Cardiac septum (tissue), 1 donor: ENCODE measurements at regions of chr21 and their contacts with region 1.

Region 1: DNA sequence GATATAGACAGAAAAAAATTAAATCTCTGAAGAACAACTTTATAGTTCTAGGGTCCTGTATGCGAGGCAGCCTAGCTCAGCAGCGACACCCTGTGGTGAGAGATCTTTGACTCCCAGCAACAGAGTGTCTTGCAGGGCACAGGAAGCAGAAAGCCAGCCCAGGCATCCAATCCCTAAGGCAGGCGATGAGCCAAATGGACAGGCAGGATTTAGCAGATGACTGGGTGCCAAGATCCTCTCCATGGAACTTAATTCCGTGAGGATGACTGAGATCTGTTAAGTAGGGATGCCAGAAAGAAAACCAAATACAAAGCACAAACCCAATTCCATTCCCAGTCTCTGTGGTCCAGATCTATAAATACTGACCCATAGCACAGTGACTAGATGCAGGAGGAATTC is 38.8 kb downstream of the HLCS start:
- DNase-seq: peak; percentile 84

Region 2: DNA sequence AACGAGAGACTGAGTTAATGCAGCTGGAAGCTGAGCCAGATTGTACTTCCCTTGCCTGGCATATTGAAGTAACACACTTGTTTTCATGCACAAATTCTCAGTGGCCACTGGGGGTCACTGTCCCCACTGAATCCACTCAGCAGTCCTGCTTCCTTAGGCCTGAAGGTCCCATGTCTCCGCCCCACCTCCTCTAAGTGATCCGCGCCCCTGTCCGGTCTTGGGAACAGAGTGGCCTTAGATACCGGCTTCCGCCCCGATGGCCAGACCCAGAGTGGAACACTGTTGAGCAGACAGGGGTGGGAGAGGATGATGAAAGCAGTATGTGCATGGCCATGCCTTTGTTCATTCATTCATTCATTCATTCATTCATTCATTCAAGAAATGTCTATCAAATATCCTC is 507.7 kb before region 1 on chr21:
- intact Hi-C with region 1: loop called (anchors 5 kb)
- DNase-seq: peak; percentile 86

Region 3: GRCh38 chr21:36504067-36505058 is 423.4 kb before region 1 on chr21:
- intact Hi-C with region 1: loop called (anchors 5 kb)
- DNase-seq: no peak

Region 4: GRCh38 chr21:36630485-36631206 is 297.1 kb before region 1 on chr21:
- intact Hi-C with region 1: loop called (anchors 2 kb)
- DNase-seq: no peak

Region 5: GRCh38 chr21:36661511-36662309 is 266.0 kb before region 1 on chr21:
- intact Hi-C with region 1: loop called (anchors 5 kb)
- DNase-seq: no peak

Region 6: DNA sequence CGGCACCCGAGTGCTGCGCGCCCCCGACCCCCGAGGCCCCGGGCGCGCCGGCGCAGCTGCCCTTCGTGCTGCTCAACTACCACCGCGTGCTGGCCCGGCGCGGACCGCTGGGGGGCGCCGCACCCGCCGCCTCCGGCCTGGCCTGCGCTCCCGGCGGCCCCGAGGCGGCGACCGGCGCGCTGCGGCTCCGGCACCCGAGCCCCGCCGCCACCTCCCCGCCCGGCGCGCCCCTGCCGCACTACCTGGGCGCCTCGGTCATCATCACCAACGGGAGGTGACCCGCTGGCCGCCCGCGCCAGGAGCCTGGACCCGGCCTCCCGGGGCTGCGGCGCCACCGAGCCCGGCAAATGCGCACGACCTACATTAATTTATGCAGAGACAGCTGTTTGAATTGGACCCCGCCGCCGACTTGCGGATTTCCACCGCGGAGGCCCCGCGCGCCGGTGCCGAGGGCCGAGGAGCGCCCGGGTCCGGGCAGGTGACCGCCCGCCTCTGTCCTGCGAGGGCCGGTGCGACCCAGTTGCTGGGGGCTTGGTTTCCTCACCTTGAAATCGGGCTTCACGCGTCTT is 179.8 kb before region 1 on chr21:
- intact Hi-C with region 1: loop called (anchors 5 kb)
- DNase-seq: no peak